Activated T-helper 2 cell treated with anti-CD3 and anti-CD28 coated beads, Interferon-gamma antibody, Interleukin-2, Interleukin-4, amounts not matched to agents 10 μg/mL and 5 μg/mL and 100 μg/mL, durations not matched to agents 14 hours and 24 hours and 36 hours (primary cell): ENCODE measurements at regions of chr1 and their contacts with region 1.

Region 1: DNA sequence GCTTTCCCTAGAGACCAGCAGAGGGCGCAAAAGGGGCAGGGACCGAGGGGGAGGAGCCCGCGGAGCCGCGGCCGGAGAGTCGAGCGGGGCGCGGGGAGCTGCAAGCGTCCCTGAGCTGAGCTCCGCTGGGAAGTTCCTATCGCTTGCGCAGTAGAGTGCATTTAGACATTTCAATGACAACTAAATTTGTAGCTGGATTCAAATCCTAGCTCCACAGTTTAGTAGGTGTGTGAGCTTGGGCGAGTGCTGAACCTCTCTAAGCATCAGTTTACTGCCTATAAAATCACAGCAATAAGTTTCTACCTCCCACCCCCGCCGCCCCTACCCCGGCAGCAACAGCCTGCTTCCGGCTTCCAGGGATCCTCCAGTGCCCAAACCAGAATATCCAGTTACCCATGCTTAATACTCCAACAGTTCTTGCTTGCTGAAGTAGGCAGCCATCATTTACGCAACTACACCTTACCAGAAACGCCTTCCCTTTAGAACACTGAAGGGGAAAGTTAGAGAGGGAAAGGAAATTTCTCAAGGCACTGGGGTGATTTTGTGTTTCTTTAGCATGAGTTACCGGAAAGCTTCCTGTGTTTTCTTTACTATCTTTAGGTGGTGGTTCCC is 9.1 kb downstream of the TLR5 start:
- DNase-seq: peak; percentile 65
- H3K4me3 Mint-ChIP-seq: peak overlapping the region; percentile 11
- H3K27ac Mint-ChIP-seq: no peak overlapping the region
- H3K4me1 Mint-ChIP-seq: peaks cover 12% of the 10 kb centered on the region
- H3K27me3 Mint-ChIP-seq: peaks cover 45% of the 10 kb centered on the region

Region 2: GRCh38 chr1:223175032-223175431 is 41.1 kb after region 1 on chr1:
- intact Hi-C with region 1: no loop called
- DNase-seq: no peak
- H3K4me3 Mint-ChIP-seq: no peak overlapping the region
- H3K27ac Mint-ChIP-seq: no peak overlapping the region
- H3K4me1 Mint-ChIP-seq: no peaks in the 10 kb centered on the region
- H3K27me3 Mint-ChIP-seq: peaks cover 18% of the 10 kb centered on the region

Region 3: GRCh38 chr1:223244366-223245103 is 110.6 kb after region 1 on chr1:
- intact Hi-C with region 1: loop called (anchors 1 kb)
- DNase-seq: no peak
- H3K4me3 Mint-ChIP-seq: no peak overlapping the region
- H3K27ac Mint-ChIP-seq: peak overlapping the region; percentile 46
- H3K4me1 Mint-ChIP-seq: peaks cover 32% of the 10 kb centered on the region
- H3K27me3 Mint-ChIP-seq: peaks cover 2% of the 10 kb centered on the region

Region 4: DNA sequence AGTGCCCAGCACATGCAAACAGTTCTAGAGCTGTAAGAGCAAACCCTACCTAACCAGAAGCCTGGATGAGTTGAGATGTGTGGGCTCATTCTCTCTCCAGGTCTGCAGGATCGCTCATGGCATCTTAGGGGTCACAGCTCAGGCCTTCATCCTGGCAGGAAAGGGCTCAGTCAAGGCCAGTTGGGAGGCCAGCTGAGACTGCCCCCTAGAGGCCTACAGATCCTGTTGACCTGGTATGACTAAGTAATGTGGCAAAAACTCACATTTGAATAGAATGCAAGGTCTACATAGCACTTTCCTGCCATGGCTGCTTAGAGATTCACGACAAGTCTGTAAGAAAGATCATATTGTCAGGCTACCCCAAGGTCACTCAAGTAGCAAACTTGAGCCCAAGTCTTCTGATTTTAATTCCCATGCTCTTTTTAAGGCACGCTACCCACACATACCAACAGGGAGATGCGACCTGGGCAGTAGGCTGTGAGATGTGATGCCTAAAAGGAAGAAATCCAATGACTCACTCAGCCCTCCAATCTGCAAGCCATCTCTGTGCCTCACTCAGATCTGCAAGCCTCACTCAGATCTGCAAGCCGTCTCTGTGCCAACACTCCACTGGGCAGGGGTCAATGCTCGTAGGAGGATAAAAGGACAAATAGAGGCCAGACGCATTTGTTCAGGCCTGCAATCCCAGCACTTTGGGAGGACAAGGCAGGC is 536.7 kb after region 1 on chr1:
- intact Hi-C with region 1: loop called (anchors 10 kb)
- DNase-seq: no peak
- H3K4me3 Mint-ChIP-seq: no peak overlapping the region
- H3K27ac Mint-ChIP-seq: no peak overlapping the region
- H3K4me1 Mint-ChIP-seq: no peaks in the 10 kb centered on the region
- H3K27me3 Mint-ChIP-seq: peaks cover 9% of the 10 kb centered on the region